MCF 10A (cell line): ENCODE measurements at regions of chr19 and their contacts with region 1.

Region 1: DNA sequence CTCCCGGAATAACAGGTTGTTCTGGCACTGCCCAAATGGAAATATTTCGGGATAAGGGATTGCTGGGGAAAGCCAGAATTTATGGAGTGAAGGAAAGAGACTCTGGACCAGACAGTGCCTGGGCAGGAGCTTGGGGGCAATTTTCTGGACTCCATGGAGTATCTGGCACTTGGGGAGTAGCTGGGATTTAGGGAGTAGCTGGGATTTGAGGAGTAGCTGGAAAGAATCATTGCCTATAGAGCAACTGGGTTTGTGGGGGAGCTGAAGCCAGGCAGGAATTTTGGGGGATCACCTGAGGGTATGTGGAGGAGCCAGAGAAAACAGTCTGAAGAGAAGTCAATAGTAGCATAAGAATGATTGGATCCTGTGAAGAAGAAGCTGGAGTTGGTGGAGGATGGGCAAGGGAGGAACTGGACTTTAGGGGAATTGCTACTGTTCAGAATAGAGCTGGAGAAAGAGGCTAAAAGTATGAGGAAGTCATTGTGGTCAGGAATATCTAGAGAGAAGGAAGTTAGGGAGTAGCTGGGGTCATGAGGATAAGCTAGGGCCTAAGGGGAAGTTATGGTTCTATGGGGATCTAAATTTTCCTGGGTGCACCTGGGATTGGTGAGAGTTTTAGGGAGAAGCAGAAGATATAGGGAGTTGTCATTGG is 14.8 kb downstream of the FSD1 start:
- DNase-seq: no peak
- H3K4me3 Mint-ChIP-seq: no peak overlapping the region
- H3K27ac Mint-ChIP-seq: no peak overlapping the region
- H3K4me1 Mint-ChIP-seq: no peaks in the 10 kb centered on the region
- H3K27me3 Mint-ChIP-seq: peaks cover 12% of the 10 kb centered on the region
- CTCF ChIP-seq: no peak

Region 2: GRCh38 chr19:4089400-4089908 is 229.7 kb before region 1 on chr19:
- CTCF ChIA-PET with region 1: no interaction called
- POLR2A ChIA-PET with region 1: no interaction called
- intact Hi-C with region 1: no loop called
- DNase-seq: no peak
- H3K4me3 Mint-ChIP-seq: no peak overlapping the region
- H3K27ac Mint-ChIP-seq: no peak overlapping the region
- H3K4me1 Mint-ChIP-seq: no peaks in the 10 kb centered on the region
- H3K27me3 Mint-ChIP-seq: no peaks in the 10 kb centered on the region
- CTCF ChIP-seq: no peak

Region 3: DNA sequence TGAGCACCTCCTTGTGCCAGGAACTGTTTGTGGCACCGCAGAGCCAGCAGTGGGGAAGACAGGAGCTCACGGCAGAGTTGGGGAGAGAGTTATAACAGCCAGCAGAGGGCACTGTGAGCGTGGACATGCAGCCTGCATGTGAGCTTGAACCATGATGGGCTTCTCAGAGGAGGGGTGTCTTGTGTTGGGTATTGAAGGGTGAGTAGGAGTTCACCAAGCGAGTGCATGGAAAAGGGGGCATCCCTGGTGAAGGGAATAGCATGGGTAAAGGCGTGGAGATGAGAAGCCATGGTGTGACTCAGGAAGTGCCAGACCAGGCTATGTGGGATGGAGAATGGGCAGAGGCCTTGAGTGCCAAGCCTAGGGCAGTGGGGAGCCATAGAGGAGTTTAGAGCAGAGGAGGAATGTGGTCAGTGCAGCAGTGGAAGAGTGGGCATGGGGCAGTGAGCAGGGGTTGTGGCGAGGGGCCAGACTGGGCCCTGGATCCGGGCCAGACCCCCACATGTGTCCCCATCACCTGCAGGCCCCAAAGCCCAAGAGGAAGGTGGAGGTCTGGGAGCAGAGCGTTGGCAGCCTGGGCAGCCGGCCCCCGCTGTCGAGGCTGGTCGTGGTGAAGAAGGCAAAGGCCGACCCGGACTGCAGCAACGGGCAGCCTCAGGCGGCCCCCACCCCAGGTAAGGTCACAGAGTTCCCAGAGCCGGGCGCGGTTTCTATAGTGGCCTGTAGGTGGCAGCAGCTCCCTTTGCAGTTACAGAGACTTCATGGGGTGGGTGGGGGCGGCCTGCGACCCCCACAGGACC is 51.9 kb before region 1 on chr19:
- CTCF ChIA-PET with region 1: interaction called, 13 read pairs
- POLR2A ChIA-PET with region 1: interaction called, 6 read pairs
- intact Hi-C with region 1: no loop called
- DNase-seq: peak; percentile 77
- H3K4me3 Mint-ChIP-seq: no peak overlapping the region
- H3K27ac Mint-ChIP-seq: no peak overlapping the region
- H3K4me1 Mint-ChIP-seq: peaks cover 5% of the 10 kb centered on the region
- H3K27me3 Mint-ChIP-seq: no peaks in the 10 kb centered on the region
- CTCF ChIP-seq: peak; percentile 87